ENCODE measurements at regions of chr4 and their contacts with region 1.

Region 1: DNA sequence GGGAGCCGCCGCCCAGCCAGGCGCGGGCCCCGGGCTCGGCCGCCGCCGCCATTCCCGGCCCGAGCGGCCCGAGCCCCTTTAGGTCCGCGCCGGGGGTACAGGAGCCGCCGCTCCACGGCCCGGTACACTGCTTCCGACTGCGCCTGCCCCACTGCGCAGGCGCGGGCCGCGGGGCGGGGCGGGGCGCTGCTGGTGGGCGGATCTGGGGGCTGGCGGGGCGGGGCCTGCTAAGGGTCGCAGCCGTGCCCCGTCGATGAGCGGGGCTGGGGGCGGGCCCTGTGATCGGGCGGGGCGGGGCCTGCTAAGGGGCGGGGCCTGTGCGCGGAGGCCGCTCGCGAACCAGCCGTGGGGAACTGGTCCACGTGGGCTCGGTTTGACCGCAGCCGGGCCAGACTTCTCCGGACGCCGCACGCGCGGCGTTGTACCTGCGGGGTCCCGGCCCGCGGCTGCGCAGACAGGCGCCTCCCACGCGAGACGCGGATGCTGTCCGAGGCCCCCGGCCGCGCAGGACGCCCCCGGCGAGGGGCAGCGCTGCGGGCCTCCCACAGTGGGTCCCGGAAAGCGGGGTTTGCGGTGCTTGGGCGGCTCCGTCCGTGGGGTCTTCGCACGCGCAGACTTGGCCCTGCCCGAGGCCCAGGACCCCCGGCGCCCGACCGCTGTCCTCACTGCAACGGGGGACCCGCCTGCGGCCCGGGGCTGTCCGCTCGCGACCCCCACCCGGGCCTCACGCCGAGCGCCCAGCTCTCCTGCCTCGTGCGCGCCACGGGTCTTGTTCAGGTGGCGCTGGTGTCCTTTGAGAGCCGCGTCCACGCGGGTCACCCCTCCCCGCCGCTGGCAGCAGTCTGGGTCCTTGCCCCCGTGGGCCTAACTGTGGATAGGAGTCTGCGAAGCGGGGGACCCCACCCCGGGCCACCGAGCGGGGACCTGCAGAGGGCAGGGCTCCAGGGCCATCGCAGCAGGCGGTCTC is at the start of gene DGKQ:
- DNase-seq: peak; percentile 89
- total RNA-seq, gene DGKQ: 11.0 and 12.9 TPM in 2 replicates

Region 2: DNA sequence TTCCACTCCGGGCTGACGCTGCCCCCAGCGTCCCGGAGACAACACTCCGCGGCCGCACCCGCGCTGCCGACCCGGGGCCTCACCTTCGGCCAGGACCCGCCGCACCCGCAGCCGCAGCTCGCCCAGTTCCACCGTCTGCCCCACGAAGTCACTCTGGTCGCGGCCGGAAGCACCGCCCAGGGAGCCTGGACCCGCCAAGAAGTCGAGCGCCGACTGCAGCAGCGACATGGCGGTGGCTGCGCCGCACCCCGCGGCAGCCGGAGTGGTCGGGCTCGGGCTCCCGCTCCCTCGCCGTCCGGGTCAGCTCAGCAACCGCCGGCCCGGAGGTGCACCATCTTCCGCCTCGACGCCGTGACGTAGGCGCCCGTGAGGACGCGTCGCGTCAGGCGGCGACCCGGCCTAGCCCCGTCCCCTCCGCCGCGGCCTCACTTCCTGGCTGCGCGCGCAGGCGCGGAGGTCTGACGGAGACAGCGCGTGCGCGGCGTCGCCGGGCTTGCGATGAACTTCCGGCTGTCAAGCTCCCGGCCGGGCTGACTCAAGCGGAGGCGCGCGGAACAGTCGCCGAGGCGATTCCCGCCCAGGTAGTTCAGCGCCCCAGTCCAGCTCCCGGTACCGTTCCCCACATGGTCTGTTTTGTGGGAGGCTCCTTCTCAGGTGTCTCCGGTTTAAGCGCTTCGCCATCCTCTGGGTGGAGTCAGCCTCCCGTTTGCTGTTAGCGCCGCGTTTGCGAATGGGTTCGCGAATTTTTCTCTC is 41.6 kb before region 1 on chr4 and contains the starts of genes GAK and TMEM175:
- in situ Hi-C with region 1: loop called (anchors 5 kb)
- DNase-seq: peak; percentile 91
- total RNA-seq, gene GAK: 91.4 and 91.5 TPM in 2 replicates
- total RNA-seq, gene TMEM175: 7.0 and 21.4 TPM in 2 replicates

Region 3: DNA sequence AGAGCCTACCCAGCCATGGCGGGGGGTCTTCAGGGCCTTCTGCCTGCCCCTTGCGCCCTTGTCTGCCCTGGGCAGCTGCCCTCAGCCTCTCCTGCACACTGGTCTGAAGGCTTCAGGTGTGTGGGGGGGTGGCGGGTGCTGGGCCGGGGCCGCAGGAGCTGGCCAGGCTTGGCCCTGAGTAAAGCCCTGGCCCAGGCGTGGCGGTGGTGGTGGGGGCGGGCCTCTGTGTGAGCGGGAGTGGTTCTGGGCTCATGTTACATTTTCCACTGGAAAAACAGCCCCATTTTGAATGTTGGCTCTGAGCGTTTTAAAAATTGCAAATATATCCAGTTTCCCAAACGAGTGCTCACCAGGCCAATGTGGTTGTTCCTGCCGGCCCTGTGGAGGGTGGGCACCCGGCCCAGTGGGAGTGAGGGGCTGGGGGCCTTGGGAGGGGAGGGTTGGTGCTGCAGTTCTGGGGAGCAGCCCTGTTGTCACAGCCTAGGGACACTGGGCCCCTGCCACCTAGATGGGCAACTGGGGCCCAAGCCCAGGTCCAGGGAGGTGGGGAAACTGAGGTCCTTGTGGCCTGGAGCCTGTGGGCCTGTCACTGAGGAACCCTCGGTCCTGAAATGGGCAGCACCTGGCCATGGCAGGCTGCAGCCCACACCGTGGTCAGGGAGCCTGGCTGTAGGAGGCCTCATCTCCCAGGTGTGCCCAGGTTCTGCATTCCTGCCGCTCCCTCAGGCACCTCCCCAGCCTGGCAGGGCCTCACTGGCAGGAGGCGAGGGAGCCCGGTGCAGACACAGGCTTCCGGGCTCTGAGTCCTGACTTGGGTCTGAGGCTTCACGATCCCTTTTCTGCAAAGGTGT is 66.0 kb after region 1 on chr4:
- in situ Hi-C with region 1: loop called (anchors 10 kb)
- DNase-seq: no peak